ENCODE measurements at regions of chr13 and their contacts with region 1.

Region 1: GRCh38 chr13:19959831-19960652 is 1.5 kb downstream of the ZMYM2 start:
- DNase-seq: peak; percentile 90
- ATAC-seq: peak; percentile 36
- H3K4me3 ChIP-seq: peak overlapping the region; percentile 96
- H3K27ac ChIP-seq: peak overlapping the region; percentile 97
- H3K4me1 ChIP-seq: peaks cover 2% of the 10 kb centered on the region; the same call in 1 of the 2 replicates
- H3K27me3 ChIP-seq: no peaks in the 10 kb centered on the region
- CTCF ChIP-seq: peak; percentile 97
- POLR2A ChIP-seq: no peak
- RAD21 ChIP-seq: peak; percentile 72

Region 2: GRCh38 chr13:19713186-19713965 is 246.7 kb before region 1 on chr13:
- CTCF ChIA-PET with region 1: no interaction called
- POLR2A ChIA-PET with region 1: no interaction called
- dilution Hi-C with region 1: no loop called
- in situ Hi-C with region 1: no loop called
- intact Hi-C with region 1: loop called (anchors 10 kb)
- DNase-seq: peak; percentile 85
- ATAC-seq: peak; percentile 82
- H3K4me3 ChIP-seq: no peak overlapping the region
- H3K27ac ChIP-seq: no peak overlapping the region
- H3K4me1 ChIP-seq: peaks cover 2% of the 10 kb centered on the region; the same call in 1 of the 2 replicates
- H3K27me3 ChIP-seq: no peaks in the 10 kb centered on the region
- CTCF ChIP-seq: no peak
- POLR2A ChIP-seq: no peak
- RAD21 ChIP-seq: no peak

Region 3: DNA sequence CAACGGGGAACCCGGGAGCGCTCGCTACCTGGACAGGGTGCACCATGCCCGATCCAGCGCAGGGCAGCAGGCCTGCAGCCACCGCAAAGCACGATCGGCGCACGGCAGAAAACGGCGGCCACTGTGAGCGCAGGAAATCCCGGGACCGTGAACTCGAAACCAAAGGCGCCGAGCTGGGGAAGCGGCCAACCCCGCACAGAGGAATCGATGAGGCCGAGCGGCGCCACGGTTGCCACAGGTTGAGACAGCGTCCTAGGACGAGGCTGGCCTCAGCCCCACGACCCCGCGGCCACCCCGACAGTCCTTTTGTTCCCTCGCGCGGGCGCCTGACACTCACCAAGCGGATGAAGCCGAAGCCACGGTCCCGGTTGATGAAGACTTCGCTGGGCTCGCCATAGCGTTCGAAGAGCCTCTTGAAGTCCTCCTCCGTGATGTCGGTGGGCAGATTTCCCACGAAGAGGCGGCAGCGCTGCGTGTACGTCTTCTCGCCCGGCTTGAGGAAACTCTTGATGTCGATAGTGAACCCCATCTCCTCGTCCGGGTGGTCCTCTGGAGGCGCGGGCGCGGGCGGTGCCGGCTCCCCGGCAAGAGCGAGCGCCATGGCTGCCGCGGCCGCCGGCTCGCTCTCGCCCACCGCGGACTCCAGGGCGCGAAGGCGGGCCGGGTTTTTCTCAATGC is 177.9 kb before region 1 on chr13:
- CTCF ChIA-PET with region 1: no interaction called
- POLR2A ChIA-PET with region 1: no interaction called
- dilution Hi-C with region 1: no loop called
- in situ Hi-C with region 1: no loop called
- intact Hi-C with region 1: loop called (anchors 2 kb)
- DNase-seq: peak; percentile 45
- ATAC-seq: peak; percentile 68
- H3K4me3 ChIP-seq: peak overlapping the region; percentile 80
- H3K27ac ChIP-seq: peak overlapping the region; percentile 91
- H3K4me1 ChIP-seq: no peaks in the 10 kb centered on the region
- H3K27me3 ChIP-seq: no peaks in the 10 kb centered on the region
- CTCF ChIP-seq: no peak
- POLR2A ChIP-seq: no peak
- RAD21 ChIP-seq: no peak

Region 4: GRCh38 chr13:19863323-19864023 is 96.6 kb before region 1 on chr13 and contains the start of gene ZMYM5:
- CTCF ChIA-PET with region 1: no interaction called
- POLR2A ChIA-PET with region 1: no interaction called
- dilution Hi-C with region 1: no loop called
- in situ Hi-C with region 1: no loop called
- intact Hi-C with region 1: loop called (anchors 1 kb)
- DNase-seq: peak; percentile 99
- ATAC-seq: peak; percentile 96
- H3K4me3 ChIP-seq: peak within 1 kb of the TSS; percentile 98
- H3K27ac ChIP-seq: peak within 1 kb of the TSS; percentile 84
- H3K4me1 ChIP-seq: peaks cover 5% of the 10 kb centered on the region; the same call in 1 of the 2 replicates
- H3K27me3 ChIP-seq: no peaks in the 10 kb centered on the region
- CTCF ChIP-seq: no peak
- POLR2A ChIP-seq: peak; percentile 79
- RAD21 ChIP-seq: no peak
- total RNA-seq, gene ZMYM5: 10.2 and 13.6 TPM in 2 replicates

Region 5: GRCh38 chr13:20006206-20006605 is 46.2 kb after region 1 on chr13:
- CTCF ChIA-PET with region 1: no interaction called
- POLR2A ChIA-PET with region 1: no interaction called
- dilution Hi-C with region 1: no loop called
- in situ Hi-C with region 1: no loop called
- intact Hi-C with region 1: loop called (anchors 2 kb)
- DNase-seq: peak; percentile 81
- ATAC-seq: peak; percentile 77
- H3K4me3 ChIP-seq: no peak overlapping the region
- H3K27ac ChIP-seq: peak overlapping the region; percentile 86
- H3K4me1 ChIP-seq: peaks cover 5% of the 10 kb centered on the region
- H3K27me3 ChIP-seq: no peaks in the 10 kb centered on the region
- CTCF ChIP-seq: no peak
- POLR2A ChIP-seq: no peak
- RAD21 ChIP-seq: no peak

Measured in IMR-90 (cell line).